ENCODE measurements at regions of chr6 and their contacts with region 1.

Region 1: DNA sequence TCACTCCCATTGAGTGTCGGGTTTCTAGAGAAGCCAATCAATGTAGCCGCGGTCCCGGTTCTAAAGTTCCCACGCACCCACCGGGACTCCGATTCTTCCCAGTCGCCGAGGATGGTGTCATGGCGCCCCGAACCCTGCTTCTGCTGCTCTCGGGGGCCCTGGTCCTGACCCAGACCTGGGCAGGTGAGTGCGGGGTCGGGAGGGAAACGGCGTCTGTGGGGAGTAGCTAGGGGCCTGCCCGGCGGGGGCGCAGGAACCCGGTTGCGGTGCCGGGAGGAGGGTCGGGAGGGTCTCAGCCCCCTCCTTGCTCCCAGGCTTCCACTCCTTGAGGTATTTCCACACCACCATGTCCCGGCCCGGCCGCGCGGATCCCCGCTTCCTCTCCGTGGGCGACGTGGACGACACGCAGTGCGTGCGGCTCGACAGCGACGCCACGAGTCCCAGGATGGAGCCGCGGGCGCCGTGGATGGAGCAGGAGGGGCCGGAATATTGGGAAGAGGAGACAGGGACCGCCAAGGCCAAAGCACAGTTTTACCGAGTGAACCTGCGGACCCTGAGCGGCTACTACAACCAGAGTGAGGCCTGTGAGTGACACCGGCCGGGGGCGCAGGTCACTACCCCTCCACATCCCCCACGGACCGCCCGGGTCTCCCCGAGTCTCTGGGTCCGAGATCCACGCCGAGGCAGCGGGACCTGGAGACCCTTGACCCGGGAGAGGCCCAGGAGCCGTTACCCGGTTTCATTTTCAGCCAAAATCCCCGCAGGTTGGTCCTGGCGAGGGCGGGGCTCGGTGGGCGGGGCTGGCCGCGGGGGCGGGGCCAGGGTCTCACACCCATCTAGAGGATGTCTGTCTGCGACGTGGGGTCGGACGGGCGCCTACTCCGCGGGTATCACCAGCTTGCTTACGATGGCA is 35.2 kb upstream of the HLA-G start:
- DNase-seq: no peak
- ATAC-seq: peak; percentile 72
- H3K4me3 ChIP-seq: peak overlapping the region; percentile 46
- H3K27ac ChIP-seq: no peak overlapping the region
- H3K4me1 ChIP-seq: no peaks in the 10 kb centered on the region
- H3K27me3 ChIP-seq: peaks cover 37% of the 10 kb centered on the region
- CTCF ChIP-seq: peak; percentile 38
- POLR2A ChIP-seq: no peak
- RAD21 ChIP-seq: no peak

Region 2: DNA sequence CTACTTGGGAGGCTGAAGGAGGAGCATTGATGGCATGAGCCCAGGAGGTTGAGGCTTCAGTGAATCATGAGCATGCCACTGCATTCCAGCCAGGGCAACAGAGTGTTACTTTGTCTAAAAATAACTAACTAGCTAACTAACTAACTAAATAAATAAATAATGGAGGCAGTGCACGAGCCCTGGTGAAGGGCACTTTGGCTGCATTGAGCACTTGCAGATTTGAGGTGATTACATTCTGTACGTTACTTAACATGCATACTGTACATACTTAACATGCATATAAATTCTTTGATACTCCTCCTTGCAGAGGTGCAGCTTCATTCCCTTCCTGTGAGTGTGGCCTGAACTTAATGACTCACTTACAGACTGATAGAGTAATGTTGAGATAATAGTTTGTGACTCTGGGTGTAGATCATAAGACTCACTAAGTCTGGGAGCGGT is 160.6 kb after region 1 on chr6:
- CTCF ChIA-PET with region 1: no interaction called
- POLR2A ChIA-PET with region 1: no interaction called
- dilution Hi-C with region 1: loop called (anchors 10 kb)
- in situ Hi-C with region 1: no loop called
- intact Hi-C with region 1: no loop called
- DNase-seq: peak; percentile 21
- ATAC-seq: no peak; the same call in 1 of the 2 replicates
- H3K4me3 ChIP-seq: no peak overlapping the region
- H3K27ac ChIP-seq: no peak overlapping the region
- H3K4me1 ChIP-seq: no peaks in the 10 kb centered on the region
- H3K27me3 ChIP-seq: no peaks in the 10 kb centered on the region
- CTCF ChIP-seq: no peak
- POLR2A ChIP-seq: no peak
- RAD21 ChIP-seq: no peak